ENCODE measurements at regions of chr2 and their contacts with region 1.

Region 1: DNA sequence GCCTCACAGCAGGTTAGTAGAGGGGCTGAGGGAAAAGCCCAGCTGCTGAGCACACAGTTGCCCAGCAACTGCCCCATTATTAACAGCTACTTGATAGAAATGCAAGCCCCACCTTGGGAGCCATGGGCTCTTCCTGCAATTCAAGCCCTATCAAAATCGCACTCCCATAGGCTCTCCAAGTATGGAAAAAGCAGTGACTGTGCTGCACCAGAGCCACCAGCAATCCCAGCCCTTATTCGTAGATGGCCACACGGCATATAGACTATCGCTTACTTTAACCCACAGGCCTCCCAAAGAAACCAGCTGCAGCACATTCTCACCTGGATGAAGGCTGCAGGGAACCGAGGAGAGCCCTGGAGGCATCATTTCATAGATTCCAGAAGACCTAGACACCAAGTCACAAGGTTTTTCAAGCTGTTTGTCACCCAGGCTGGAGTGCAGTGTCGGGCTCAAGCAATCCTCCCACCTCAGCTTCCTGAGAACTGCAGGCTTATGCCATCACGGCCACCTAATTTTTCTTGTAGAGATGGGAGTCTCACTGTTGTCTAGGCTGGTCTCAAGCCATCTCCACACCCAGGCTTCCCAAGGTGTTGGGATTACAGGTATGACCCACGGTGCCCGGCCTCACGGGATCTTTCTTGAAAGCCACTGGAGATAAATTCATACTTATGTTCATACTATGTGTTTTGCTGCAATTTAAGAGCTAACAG is 11.3 kb downstream of the NCL start:
- DNase-seq: peak in 1 of 14 experiments; percentile 24
- ATAC-seq: no peak
- H3K4me3 ChIP-seq: no peak overlapping the region
- H3K4me3 Mint-ChIP-seq: peak overlapping the region; percentile 20
- H3K27ac ChIP-seq: no peak overlapping the region
- H3K27ac Mint-ChIP-seq: peak overlapping the region; percentile 82
- H3K4me1 ChIP-seq: peaks cover 8% of the 10 kb centered on the region
- H3K4me1 Mint-ChIP-seq: peaks cover 22% of the 10 kb centered on the region
- H3K27me3 ChIP-seq: no peaks in the 10 kb centered on the region
- H3K27me3 Mint-ChIP-seq: no peaks in the 10 kb centered on the region
- CTCF ChIP-seq: no peak

Region 2: GRCh38 chr2:231227309-231228162 is 225.4 kb before region 1 on chr2:
- CTCF ChIA-PET with region 1: interaction called, 6 read pairs
- POLR2A ChIA-PET with region 1: interaction called, 3 read pairs
- intact Hi-C with region 1: loop called (anchors 1 to 2 kb)
- DNase-seq: peak in 11 of 14 experiments; percentile 2 to 74 (median 16)
- ATAC-seq: peak; percentile 97
- H3K4me3 ChIP-seq: no peak overlapping the region
- H3K4me3 Mint-ChIP-seq: no peak overlapping the region
- H3K27ac ChIP-seq: no peak overlapping the region
- H3K27ac Mint-ChIP-seq: no peak overlapping the region
- H3K4me1 ChIP-seq: no peaks in the 10 kb centered on the region
- H3K4me1 Mint-ChIP-seq: no peaks in the 10 kb centered on the region
- H3K27me3 ChIP-seq: no peaks in the 10 kb centered on the region
- H3K27me3 Mint-ChIP-seq: no peaks in the 10 kb centered on the region
- CTCF ChIP-seq: peak; percentile 48

Region 3: DNA sequence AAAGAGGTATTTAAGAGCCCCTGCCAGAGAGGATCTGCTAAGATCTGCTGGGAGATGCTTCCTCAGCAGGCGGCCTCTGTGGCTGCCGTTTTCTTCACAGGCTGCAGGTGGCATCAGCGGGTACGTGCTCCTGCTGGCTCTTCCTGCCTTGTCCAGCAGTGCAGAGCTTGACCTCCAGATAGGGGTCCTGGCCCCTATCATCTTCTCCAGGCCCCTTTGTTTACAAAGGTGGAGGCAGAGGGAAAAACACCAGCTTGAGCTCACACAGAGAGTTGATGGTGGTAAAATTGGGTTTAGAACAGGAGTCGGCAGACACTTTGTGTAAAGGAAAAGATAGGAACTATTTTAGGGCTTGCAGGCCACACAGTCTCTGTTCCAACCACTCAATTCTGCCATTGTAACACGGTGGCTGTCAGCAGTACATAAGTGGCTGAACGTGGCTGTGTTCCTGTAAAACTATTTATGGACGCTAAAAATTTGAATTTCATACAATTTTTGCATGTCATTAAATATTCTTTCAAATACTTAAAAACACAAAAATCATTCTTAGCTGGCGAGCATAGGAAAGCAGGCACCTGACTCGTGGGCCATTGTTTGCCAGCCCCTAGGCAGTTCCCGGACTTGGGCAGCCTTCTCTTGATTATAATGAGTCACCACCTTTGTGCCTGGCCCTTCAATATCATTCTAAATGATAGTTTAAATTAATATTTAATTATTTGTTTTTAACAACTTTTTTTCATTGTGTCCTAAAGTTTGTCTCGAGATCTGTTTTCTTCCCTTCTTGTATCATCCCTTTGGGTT is 155.6 kb before region 1 on chr2:
- CTCF ChIA-PET with region 1: no interaction called
- POLR2A ChIA-PET with region 1: no interaction called
- intact Hi-C with region 1: loop called (anchors 5 kb)
- DNase-seq: peak in 6 of 14 experiments; percentile 3 to 49 (median 17)
- ATAC-seq: no peak
- H3K4me3 ChIP-seq: no peak overlapping the region
- H3K4me3 Mint-ChIP-seq: no peak overlapping the region
- H3K27ac ChIP-seq: no peak overlapping the region
- H3K27ac Mint-ChIP-seq: no peak overlapping the region
- H3K4me1 ChIP-seq: no peaks in the 10 kb centered on the region
- H3K4me1 Mint-ChIP-seq: no peaks in the 10 kb centered on the region
- H3K27me3 ChIP-seq: no peaks in the 10 kb centered on the region
- H3K27me3 Mint-ChIP-seq: no peaks in the 10 kb centered on the region
- CTCF ChIP-seq: peak; percentile 22

Measured in CD4-positive, alpha-beta T cell (primary cell).